CD14-positive monocyte (primary cell): ENCODE measurements at regions of chr15 and their contacts with region 1.

Region 1: GRCh38 chr15:41989259-41989933 is 17.0 kb upstream of the EHD4 start:
- DNase-seq: peak; percentile 66 to 78 (median 75)
- H3K4me3 ChIP-seq: no peak overlapping the region
- H3K4me3 Mint-ChIP-seq: no peak overlapping the region
- H3K27ac ChIP-seq: no peak overlapping the region
- H3K27ac Mint-ChIP-seq: no peak overlapping the region
- H3K4me1 ChIP-seq: no peaks in the 10 kb centered on the region
- H3K4me1 Mint-ChIP-seq: peaks cover 4% of the 10 kb centered on the region
- H3K27me3 ChIP-seq: no peaks in the 10 kb centered on the region
- H3K27me3 Mint-ChIP-seq: peaks cover 1 to 8% (median 4%) of the 10 kb centered on the region in 3 donors
- CTCF ChIP-seq: peak; percentile 97

Region 2: GRCh38 chr15:42056934-42057779 is 67.8 kb after region 1 on chr15:
- intact Hi-C with region 1: loop called (anchors 2 to 5 kb)
- DNase-seq: peak; percentile 84 to 97 (median 92)
- H3K4me3 ChIP-seq: peak overlapping the region in 2 of 3 experiments; percentile 22 to 44
- H3K4me3 Mint-ChIP-seq: peak overlapping the region; percentile 63 to 75
- H3K27ac ChIP-seq: peak overlapping the region; percentile 13 to 57
- H3K27ac Mint-ChIP-seq: peak overlapping the region; percentile 44 to 97 (median 90)
- H3K4me1 ChIP-seq: peaks cover 15 to 18% of the 10 kb centered on the region in 2 donors
- H3K4me1 Mint-ChIP-seq: peaks cover 26% of the 10 kb centered on the region
- H3K27me3 ChIP-seq: no peaks in the 10 kb centered on the region
- H3K27me3 Mint-ChIP-seq: peaks cover 8 to 20% (median 11%) of the 10 kb centered on the region in 3 donors
- CTCF ChIP-seq: peak; percentile 70

Region 3: GRCh38 chr15:42084460-42085235 is 95.3 kb after region 1 on chr15:
- intact Hi-C with region 1: loop called (anchors 1 to 10 kb)
- DNase-seq: peak; percentile 65 to 70 (median 68)
- H3K4me3 ChIP-seq: no peak overlapping the region
- H3K4me3 Mint-ChIP-seq: peak overlapping the region in 1 of 2 donors; percentile 71
- H3K27ac ChIP-seq: no peak overlapping the region
- H3K27ac Mint-ChIP-seq: peak overlapping the region in 3 of 7 donors; percentile 25 to 46 (median 26)
- H3K4me1 ChIP-seq: peaks cover 11% of the 10 kb centered on the region in 2 donors
- H3K4me1 Mint-ChIP-seq: peaks cover 17% of the 10 kb centered on the region
- H3K27me3 ChIP-seq: no peaks in the 10 kb centered on the region
- H3K27me3 Mint-ChIP-seq: peaks cover 4 to 13% (median 5%) of the 10 kb centered on the region in 3 donors
- CTCF ChIP-seq: peak; percentile 94

Region 4: DNA sequence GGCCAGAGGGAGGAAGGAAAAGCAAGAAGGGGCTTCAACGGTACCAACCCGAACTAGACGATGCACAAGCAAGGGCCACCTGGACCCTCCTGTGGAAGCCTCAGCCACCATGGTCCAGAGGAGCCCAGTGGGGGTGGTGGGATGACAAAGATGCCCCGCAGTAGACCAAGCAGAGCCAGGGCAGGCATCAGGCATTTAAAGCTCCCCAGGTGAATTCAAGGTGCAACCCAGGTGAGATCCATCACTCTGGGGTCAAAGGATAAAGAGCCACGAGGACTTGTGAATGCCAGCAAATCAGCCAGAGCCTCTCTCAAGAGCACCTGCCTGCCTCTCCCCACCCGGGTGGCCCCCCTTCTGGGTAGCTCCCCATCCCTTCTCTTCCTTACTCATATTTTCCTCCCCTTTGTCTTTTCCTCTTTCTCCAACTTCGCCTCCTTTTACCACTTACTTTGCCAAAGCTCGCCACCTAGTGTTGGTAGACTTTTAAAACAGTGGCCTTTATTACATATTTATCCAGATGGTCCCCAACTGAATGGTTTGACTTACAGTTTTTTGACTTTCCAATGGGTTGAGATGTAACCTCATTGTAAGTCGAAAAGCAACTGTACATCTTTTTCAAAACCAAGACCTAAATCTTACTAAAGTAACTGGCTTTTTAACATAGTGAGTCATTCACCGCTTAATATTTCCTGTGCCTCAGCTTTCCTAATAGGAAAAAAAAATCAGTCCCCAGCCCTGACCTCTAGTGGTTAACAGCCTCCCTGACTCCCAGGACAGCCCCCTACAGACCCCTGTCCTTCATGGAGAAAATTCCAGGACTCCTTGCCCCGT is 148.2 kb after region 1 on chr15:
- intact Hi-C with region 1: loop called (anchors 5 kb)
- DNase-seq: peak; percentile 24 to 40 (median 39)
- H3K4me3 ChIP-seq: no peak overlapping the region
- H3K4me3 Mint-ChIP-seq: no peak overlapping the region
- H3K27ac ChIP-seq: no peak overlapping the region
- H3K27ac Mint-ChIP-seq: peak overlapping the region in 1 of 7 donors; percentile 57
- H3K4me1 ChIP-seq: no peaks in the 10 kb centered on the region
- H3K4me1 Mint-ChIP-seq: peaks cover 5% of the 10 kb centered on the region
- H3K27me3 ChIP-seq: no peaks in the 10 kb centered on the region
- H3K27me3 Mint-ChIP-seq: peaks cover 0 to 2% (median 0%) of the 10 kb centered on the region in 3 donors
- CTCF ChIP-seq: peak; percentile 68